ENCODE measurements at regions of chr19 and their contacts with region 1.

Region 1: GRCh38 chr19:12847159-12848139 is 9.1 kb downstream of the MAST1 start:
- DNase-seq: peak; percentile 82 to 95 (median 95)
- ATAC-seq: peak; percentile 97
- H3K4me3 ChIP-seq: no peak overlapping the region
- H3K27ac ChIP-seq: no peak overlapping the region
- H3K4me1 ChIP-seq: no peaks in the 10 kb centered on the region
- H3K27me3 ChIP-seq: no peaks in the 10 kb centered on the region

Region 2: GRCh38 chr19:12666265-12667048 is 181.0 kb before region 1 on chr19 and contains the starts of genes MAN2B1 and WDR83:
- intact Hi-C with region 1: loop called in 1 of 4 experiments (anchors 10 kb)
- DNase-seq: peak; percentile 73 to 92 (median 91)
- ATAC-seq: peak; percentile 84 to 86
- H3K4me3 ChIP-seq: peak within 1 kb of the TSS; percentile 98
- H3K27ac ChIP-seq: peak within 1 kb of the TSS; percentile 75
- H3K4me1 ChIP-seq: peaks cover 7% of the 10 kb centered on the region
- H3K27me3 ChIP-seq: no peaks in the 10 kb centered on the region
- total RNA-seq, gene MAN2B1: 32.7 to 52.6 (median 42.1) TPM
- total RNA-seq, gene WDR83: 6.3 to 10.5 (median 8.1) TPM

Region 3: DNA sequence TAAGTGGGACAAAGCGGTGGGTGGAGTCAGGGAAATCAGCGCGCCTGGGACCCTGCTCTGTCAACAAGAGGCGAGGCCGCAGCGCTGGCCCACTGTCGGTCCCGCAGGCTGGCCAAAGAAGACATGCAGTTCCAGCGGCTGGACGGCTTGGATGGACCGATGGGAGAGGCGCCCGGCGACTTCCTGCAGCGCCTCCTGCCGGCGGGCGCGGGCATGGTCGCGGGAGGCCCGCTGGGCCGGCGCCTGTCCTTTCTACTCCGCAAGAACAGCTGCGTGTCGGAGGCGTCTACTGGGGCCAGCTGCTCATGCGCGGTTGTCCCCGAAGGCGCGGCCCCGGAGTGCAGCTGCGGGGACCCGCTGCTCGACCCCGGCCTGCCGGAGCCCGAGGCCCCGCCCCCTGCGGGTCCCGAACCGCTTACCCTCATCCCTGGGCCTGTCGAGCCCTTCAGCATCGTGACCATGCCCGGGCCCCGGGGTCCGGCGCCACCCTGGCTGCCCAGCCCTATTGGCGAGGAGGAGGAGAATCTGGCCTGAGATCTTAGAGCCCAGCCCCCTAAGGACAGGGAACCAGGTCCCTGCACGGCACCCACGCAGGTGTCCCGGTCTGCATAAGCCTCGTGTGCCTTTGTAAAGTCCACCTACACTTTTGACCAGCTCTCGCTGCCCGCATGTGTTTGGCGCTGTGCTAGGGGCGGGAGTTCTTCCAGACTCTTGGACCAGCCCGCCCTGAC is 89.7 kb before region 1 on chr19:
- intact Hi-C with region 1: loop called in 1 of 4 experiments (anchors 2 kb)
- DNase-seq: peak; percentile 79 to 88 (median 87)
- ATAC-seq: peak; percentile 85 to 89
- H3K4me3 ChIP-seq: peak overlapping the region; percentile 17
- H3K27ac ChIP-seq: no peak overlapping the region
- H3K4me1 ChIP-seq: no peaks in the 10 kb centered on the region
- H3K27me3 ChIP-seq: no peaks in the 10 kb centered on the region

Region 4: DNA sequence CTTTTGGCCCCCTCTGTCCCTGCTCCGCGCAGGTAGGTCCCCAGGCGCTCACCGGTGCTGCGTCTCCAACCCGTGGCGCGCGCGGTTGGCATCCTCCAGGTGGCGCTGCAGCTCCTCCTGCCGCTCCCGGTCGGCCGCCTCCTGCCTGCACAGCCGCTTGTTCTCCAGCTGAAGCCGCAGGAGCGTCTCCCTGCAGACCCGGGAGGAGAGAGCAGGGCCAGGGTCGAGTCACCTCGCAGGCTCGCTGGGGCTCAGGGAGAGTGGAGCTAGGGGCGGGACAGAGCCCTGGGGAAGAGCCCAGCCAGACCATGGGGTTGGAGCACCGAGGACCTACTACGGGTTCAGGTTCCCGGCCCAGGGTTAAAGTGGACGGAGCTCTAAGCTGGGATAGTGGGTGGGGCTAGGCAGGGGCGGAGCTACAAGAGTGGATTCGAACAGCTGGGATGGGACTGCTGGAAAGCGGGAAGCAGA is 81.4 kb before region 1 on chr19:
- intact Hi-C with region 1: loop called in 3 of 4 experiments (anchors 2 to 5 kb)
- DNase-seq: peak; percentile 79 to 96 (median 95)
- ATAC-seq: peak; percentile 86 to 91
- H3K4me3 ChIP-seq: no peak overlapping the region
- H3K27ac ChIP-seq: no peak overlapping the region
- H3K4me1 ChIP-seq: no peaks in the 10 kb centered on the region
- H3K27me3 ChIP-seq: no peaks in the 10 kb centered on the region

Measured in right cardiac atrium (tissue), 5 donors.